ENCODE measurements at regions of chr3 and their contacts with region 1.

Region 1: GRCh38 chr3:32460031-32460749 is 42.5 kb downstream of the CMTM6 start:
- DNase-seq: peak; percentile 79
- H3K4me3 Mint-ChIP-seq: peak overlapping the region; percentile 72
- H3K27ac Mint-ChIP-seq: peak overlapping the region; percentile 92
- H3K4me1 Mint-ChIP-seq: peaks cover 26% of the 10 kb centered on the region
- H3K27me3 Mint-ChIP-seq: no peaks in the 10 kb centered on the region

Region 2: GRCh38 chr3:31952205-31952604 is 508.0 kb before region 1 on chr3:
- intact Hi-C with region 1: no loop called
- DNase-seq: no peak
- H3K4me3 Mint-ChIP-seq: no peak overlapping the region
- H3K27ac Mint-ChIP-seq: no peak overlapping the region
- H3K4me1 Mint-ChIP-seq: peaks cover 7% of the 10 kb centered on the region
- H3K27me3 Mint-ChIP-seq: no peaks in the 10 kb centered on the region

Region 3: GRCh38 chr3:32302601-32303398 is 157.4 kb before region 1 on chr3:
- intact Hi-C with region 1: loop called (anchors 2 kb)
- DNase-seq: no peak
- H3K4me3 Mint-ChIP-seq: peak overlapping the region; percentile 48
- H3K27ac Mint-ChIP-seq: peak overlapping the region; percentile 85
- H3K4me1 Mint-ChIP-seq: peaks cover 70% of the 10 kb centered on the region
- H3K27me3 Mint-ChIP-seq: no peaks in the 10 kb centered on the region

Region 4: GRCh38 chr3:32374788-32375595 is 85.2 kb before region 1 on chr3:
- intact Hi-C with region 1: loop called (anchors 1 kb)
- DNase-seq: peak; percentile 65
- H3K4me3 Mint-ChIP-seq: no peak overlapping the region
- H3K27ac Mint-ChIP-seq: peak overlapping the region; percentile 36
- H3K4me1 Mint-ChIP-seq: peaks cover 24% of the 10 kb centered on the region
- H3K27me3 Mint-ChIP-seq: no peaks in the 10 kb centered on the region

Region 5: DNA sequence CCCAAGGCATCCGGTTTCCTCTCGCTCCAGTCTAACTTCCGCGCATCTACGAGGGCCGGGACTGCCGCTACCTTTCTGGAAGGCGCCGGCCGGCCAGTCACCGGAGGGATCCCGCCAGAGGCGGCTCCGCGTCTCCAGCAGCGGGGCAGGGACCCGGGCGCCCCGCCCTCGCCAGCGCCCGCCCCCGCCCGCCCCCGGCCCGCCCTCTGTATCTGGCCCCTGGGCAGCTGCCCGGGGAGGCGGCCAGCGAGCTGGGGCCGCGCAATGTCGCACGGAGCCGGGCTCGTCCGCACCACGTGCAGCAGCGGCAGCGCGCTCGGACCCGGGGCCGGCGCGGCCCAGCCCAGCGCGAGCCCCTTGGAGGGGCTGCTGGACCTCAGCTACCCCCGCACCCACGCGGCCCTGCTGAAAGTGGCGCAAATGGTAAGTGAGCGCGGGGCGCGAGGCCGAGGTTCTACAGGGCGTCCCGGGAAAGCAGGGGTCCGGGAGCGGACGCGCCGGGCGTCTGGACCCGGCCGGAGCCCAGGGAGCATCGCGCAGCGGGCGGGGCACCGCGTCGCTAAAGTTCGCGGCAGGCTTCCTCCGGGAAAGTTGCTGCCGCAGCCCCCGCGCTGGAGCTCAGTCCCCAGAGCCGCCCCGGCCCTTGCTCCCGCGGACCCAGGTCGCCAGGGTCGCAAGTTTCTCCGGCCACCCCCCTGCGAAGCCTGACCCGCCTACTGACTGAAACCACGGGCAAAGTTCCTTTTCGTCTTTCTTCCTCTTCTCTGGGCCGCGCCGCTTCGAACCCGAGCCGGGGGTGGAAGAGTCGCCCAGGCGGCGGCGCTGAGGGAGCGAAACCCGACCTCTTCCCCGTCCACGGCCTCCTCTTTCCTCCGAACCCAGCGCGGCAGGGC is 68.3 kb before region 1 on chr3 and contains the start of gene CMTM7:
- intact Hi-C with region 1: loop called (anchors 1 kb)
- DNase-seq: peak; percentile 66
- H3K4me3 Mint-ChIP-seq: peak within 1 kb of the TSS; percentile 98
- H3K27ac Mint-ChIP-seq: peak within 1 kb of the TSS; percentile 98
- H3K4me1 Mint-ChIP-seq: peaks cover 61% of the 10 kb centered on the region
- H3K27me3 Mint-ChIP-seq: no peaks in the 10 kb centered on the region
- total RNA-seq, gene CMTM7: 50.6 and 59.7 TPM in 2 replicates

Region 6: GRCh38 chr3:32436816-32437189 is 23.4 kb before region 1 on chr3:
- intact Hi-C with region 1: loop called (anchors 1 kb)
- DNase-seq: no peak
- H3K4me3 Mint-ChIP-seq: no peak overlapping the region
- H3K27ac Mint-ChIP-seq: peak overlapping the region; percentile 85
- H3K4me1 Mint-ChIP-seq: peaks cover 78% of the 10 kb centered on the region
- H3K27me3 Mint-ChIP-seq: no peaks in the 10 kb centered on the region

Region 7: DNA sequence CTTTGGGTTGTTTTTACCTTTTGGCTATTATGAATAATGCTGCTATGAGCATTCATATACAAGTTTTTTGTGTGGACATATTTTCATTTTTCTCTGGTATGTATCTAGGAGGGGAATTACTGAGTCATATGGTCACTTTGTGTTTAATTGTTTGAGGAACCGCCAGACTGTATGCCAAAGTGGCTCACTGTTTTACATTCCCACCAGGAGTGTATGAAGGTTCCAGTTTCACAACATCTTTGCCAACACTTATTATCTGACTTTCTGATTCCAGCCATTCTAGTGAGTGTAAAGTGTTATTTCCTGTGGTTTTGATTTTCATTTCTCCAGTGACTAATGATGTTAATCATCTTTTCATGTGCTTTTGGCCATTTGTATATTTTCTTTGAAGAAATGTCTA is 16.7 kb before region 1 on chr3:
- intact Hi-C with region 1: loop called (anchors 1 kb)
- DNase-seq: no peak
- H3K4me3 Mint-ChIP-seq: no peak overlapping the region
- H3K27ac Mint-ChIP-seq: peak overlapping the region; percentile 11
- H3K4me1 Mint-ChIP-seq: peaks cover 57% of the 10 kb centered on the region
- H3K27me3 Mint-ChIP-seq: no peaks in the 10 kb centered on the region

Measured in activated T-helper 1 cell treated with anti-CD3 and anti-CD28 coated beads, Interleukin-12 subunit alpha, Interleukin-12 subunit beta, Interleukin-2, Interleukin-4 antibody, amounts not matched to agents 30 ng/mL and 10 ng/mL and 1 ng/mL, durations not matched to agents 14 hours and 24 hours and 36 hours (primary cell).